Ascending aorta (tissue), 2 donors: ENCODE measurements at regions of chr2 and their contacts with region 1.

Region 1: GRCh38 chr2:27071277-27071989 is at the start of gene OST4:
- DNase-seq: peak; percentile 78 to 97
- H3K4me3 ChIP-seq: peak within 1 kb of the TSS; percentile 81 to 91
- H3K27ac ChIP-seq: peak within 1 kb of the TSS; percentile 94 to 97
- H3K4me1 ChIP-seq: peaks cover 11 to 50% of the 10 kb centered on the region in 2 donors
- H3K27me3 ChIP-seq: no peaks in the 10 kb centered on the region
- CTCF ChIP-seq: peak in 1 of 3 experiments; percentile 16
- total RNA-seq, gene OST4: 158 TPM

Region 2: GRCh38 chr2:26696351-26696816 is 375.0 kb before region 1 on chr2:
- intact Hi-C with region 1: no loop called
- DNase-seq: no peak
- H3K4me3 ChIP-seq: no peak overlapping the region
- H3K27ac ChIP-seq: no peak overlapping the region
- H3K4me1 ChIP-seq: peaks cover 13 to 14% of the 10 kb centered on the region in 2 donors
- H3K27me3 ChIP-seq: no peaks in the 10 kb centered on the region
- CTCF ChIP-seq: no peak

Region 3: DNA sequence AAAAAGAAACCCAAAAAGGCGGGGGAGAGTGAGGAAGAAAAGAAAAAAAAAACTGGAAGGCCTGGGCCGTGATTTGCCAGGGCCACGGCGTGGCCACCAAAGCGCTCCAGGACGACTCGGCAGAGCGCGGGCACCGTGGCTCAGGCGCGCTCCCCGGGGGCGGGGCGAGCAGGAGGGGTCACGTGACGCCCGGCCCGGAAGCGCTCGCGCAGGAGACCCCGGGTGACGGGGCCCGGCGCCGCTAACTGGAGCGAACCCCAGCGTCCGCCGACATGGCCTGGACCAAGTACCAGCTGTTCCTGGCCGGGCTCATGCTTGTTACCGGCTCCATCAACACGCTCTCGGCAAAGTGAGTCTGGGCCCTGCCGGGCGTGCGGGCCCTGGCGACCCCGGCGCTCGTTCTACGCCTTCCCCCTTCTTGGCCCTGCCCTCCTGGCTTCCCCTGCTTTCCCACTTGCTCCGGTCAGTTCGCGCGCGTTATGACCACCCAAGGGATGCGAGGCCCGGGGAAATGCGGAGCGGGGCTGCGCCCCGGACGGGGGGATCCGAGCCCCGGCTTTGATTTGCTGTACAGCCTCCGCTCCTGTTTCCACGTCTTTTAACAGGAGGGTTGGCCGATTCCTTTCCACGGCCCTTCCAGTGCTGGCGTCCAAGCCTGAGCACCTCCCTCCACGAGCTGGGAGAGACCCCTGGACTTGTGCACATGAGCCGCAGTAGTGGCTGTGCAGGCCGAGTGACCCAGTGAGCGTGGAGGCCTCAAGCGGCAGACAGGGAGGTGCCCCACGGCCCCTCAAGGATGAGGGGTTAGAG is 307.1 kb before region 1 on chr2 and contains the start of gene SLC35F6:
- intact Hi-C with region 1: loop called (anchors 10 kb)
- DNase-seq: peak in 1 of 2 donors; percentile 89
- H3K4me3 ChIP-seq: peak within 1 kb of the TSS; percentile 75 to 96
- H3K27ac ChIP-seq: peak within 1 kb of the TSS; percentile 86 to 97
- H3K4me1 ChIP-seq: peaks cover 7 to 31% of the 10 kb centered on the region in 2 donors
- H3K27me3 ChIP-seq: no peaks in the 10 kb centered on the region
- CTCF ChIP-seq: no peak
- total RNA-seq, gene SLC35F6: 43.4 TPM

Region 4: DNA sequence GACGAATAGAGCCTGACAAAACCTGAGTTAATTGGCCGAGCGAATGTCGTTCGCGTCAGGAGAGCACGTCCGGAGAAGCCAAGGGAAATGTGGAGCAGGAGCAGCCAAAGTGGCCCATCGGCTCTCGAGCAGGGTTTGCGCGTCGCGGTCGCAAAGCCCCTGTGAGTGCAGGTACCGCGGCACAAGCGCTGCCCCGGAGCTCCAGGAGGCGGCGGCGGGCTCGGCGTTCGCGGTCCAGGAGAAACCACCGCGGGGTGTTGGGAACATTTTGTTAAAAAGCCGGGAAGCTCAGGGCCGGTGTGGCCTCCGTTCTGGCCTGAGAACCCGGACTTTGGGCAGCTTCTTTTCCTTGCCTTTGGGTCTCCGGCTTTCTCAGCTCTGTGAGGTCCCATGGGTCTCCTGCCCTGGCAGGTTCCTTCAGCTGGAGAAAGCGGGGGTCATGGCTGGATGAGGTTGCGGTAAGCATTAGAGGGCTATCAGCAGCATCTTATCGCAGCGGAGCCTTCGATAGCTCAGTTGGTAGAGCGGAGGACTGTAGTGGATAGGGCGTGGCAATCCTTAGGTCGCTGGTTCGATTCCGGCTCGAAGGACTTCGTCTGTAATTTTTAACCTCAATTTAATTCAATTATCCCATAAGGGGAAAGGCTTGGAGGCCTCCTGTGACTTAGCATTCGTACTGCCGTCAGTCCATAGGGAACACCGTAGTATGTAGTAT is 21.0 kb before region 1 on chr2:
- intact Hi-C with region 1: loop called (anchors 1 kb)
- DNase-seq: peak; percentile 72 to 96
- H3K4me3 ChIP-seq: peak overlapping the region; percentile 71 to 85
- H3K27ac ChIP-seq: peak overlapping the region; percentile 85 to 93
- H3K4me1 ChIP-seq: peaks cover 0 to 4% of the 10 kb centered on the region in 2 donors
- H3K27me3 ChIP-seq: no peaks in the 10 kb centered on the region
- CTCF ChIP-seq: peak; percentile 51 to 64 (median 55)